HEK293 (cell line): ENCODE measurements at regions of chr2 and their contacts with region 1.

Region 1: GRCh38 chr2:196750982-196751635 is 48.4 kb downstream of the GTF3C3 start:
- H3K4me3 ChIP-seq: no peak overlapping the region
- H3K27ac ChIP-seq: no peak overlapping the region
- H3K4me1 ChIP-seq: no peaks in the 10 kb centered on the region
- CTCF ChIP-seq: no peak

Region 2: DNA sequence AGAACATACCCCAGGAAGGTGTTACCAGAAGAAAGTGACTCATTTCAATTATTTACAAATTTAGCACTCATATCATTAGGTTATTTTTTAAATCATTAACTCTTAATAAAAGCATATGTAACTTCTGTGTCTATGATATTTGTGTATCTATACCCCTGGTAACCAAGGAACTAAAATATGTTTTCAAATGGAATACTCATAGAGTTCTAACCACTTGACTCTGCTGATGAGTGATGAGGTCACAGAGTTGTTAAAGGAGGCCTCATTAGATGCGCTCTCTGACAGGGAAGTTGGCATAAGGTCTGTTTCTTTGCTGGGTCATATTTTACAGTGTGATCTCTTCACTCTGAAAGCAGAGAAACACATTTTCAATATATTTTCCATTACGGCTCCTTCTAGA is 38.2 kb before region 1 on chr2:
- CTCF ChIA-PET with region 1: no interaction called
- POLR2A ChIA-PET with region 1: no interaction called
- H3K4me3 ChIP-seq: no peak overlapping the region
- H3K27ac ChIP-seq: no peak overlapping the region
- H3K4me1 ChIP-seq: no peaks in the 10 kb centered on the region
- CTCF ChIP-seq: no peak

Region 3: DNA sequence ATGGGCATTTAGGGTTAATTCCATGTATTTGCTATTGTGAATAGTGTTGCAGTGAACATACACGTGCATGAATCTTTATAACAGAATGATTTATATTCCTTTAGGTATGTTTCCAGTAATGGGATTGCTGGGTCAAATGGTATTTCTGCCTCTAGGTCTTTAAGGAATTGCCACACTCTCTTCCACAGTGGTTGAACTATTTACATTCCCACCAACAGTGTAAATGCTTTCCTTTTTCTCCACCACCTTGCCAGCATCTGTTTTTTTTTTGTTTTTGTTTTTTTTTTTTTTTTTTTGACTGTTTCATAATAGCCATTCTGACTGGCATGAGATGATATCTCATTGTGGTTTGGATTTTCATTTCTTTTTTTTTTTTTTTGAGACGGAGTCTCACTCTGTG is 14.1 kb before region 1 on chr2:
- CTCF ChIA-PET with region 1: interaction called, 20 read pairs
- POLR2A ChIA-PET with region 1: no interaction called
- H3K4me3 ChIP-seq: no peak overlapping the region
- H3K27ac ChIP-seq: no peak overlapping the region
- H3K4me1 ChIP-seq: no peaks in the 10 kb centered on the region
- CTCF ChIP-seq: no peak

Region 4: DNA sequence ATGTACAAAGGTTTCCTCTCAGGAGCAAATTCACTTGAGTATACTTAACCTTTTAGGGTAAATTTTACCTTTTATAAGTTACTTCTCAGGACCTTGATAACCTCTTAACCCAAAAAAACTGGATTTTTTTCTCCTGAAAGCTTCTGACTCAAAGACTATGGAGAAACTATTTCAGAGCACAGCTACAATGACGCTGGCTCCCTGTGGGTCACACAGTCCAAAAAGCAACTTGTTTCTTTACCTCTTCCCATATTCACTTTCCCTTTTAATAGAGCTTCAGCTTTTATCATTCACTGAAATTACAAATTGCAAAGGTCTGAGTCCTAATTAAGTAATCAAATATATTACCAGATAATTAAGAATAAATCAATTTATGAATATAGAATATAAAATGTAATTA is 16.0 kb after region 1 on chr2:
- CTCF ChIA-PET with region 1: interaction called, 30 read pairs
- POLR2A ChIA-PET with region 1: no interaction called
- H3K4me3 ChIP-seq: no peak overlapping the region
- H3K27ac ChIP-seq: no peak overlapping the region
- H3K4me1 ChIP-seq: no peaks in the 10 kb centered on the region
- CTCF ChIP-seq: no peak

Region 5: GRCh38 chr2:196827356-196827755 is 76.2 kb after region 1 on chr2:
- CTCF ChIA-PET with region 1: no interaction called
- POLR2A ChIA-PET with region 1: no interaction called
- H3K4me3 ChIP-seq: no peak overlapping the region
- H3K27ac ChIP-seq: no peak overlapping the region
- H3K4me1 ChIP-seq: no peaks in the 10 kb centered on the region
- CTCF ChIP-seq: no peak